ENCODE measurements at regions of chr22 and their contacts with region 1.

Region 1: DNA sequence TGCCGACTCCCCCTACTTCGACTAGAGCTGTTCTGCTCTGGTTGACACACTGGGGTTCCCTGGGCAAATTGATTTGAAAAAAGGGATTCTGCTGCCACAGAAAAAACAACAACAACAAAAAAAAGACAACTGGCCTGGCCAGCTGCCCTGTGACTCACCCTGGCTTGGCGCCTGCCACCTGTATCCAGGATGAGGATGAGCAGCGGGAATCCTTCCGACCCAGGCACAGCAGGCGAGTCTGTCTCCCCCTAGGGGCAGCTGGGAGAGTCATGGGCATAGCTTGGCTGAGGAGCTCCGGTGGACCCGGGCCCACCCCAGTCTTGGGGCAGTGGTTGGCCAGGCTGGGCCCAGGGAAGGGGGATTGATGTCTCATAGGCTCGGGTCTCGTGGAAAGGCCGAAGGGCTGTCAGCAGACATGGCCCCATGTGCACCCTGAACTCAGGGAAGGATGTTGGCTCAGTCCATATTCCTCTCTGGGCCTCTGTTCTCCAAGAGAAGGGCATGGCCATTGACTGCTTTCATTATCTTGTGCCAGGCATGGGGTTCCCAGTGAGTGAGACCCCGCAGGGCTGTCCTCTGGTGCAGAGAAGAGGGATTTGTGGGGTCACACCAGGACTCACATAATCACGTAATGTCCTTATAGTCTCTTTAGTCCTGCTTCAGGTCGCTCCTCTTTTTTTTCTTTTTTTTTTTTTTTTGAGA is 10.4 kb upstream of the SUN2 start:
- DNase-seq: peak; percentile 64
- ATAC-seq: peak; percentile 42 to 78

Region 2: GRCh38 chr22:38802671-38803121 is 36.5 kb after region 1 on chr22:
- intact Hi-C with region 1: no loop called
- DNase-seq: peak; percentile 63
- ATAC-seq: peak; percentile 94 to 95

Region 3: GRCh38 chr22:38843201-38843715 is 77.0 kb after region 1 on chr22:
- intact Hi-C with region 1: loop called in 1 of 2 experiments (anchors 5 kb)
- DNase-seq: peak; percentile 60
- ATAC-seq: peak; percentile 69 to 83

Region 4: DNA sequence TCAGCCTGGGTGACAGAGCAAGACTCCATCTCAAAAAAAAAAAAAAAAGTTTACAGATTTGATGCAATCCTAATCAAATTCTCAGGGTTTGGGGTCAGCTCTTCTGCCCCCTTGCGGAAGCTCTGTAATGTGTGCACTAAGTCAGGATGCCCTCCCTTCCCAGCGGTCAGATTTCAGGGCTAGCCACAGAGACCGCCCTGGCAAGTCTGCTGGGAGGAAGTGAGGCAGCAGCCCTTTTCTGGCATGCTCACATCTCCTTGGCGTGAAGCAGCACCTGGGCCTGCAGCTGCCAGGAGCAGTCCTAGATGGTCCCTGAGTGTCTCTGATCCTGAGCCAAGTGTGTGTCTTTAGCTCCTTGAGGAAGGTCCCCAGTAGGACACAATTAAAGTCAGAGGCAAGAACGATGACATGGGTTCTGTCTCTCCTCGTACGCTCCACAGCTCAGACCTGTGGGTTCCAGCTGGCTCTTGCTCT is 237.0 kb after region 1 on chr22:
- intact Hi-C with region 1: loop called in 1 of 2 experiments (anchors 10 kb)
- DNase-seq: peak; percentile 81
- ATAC-seq: peak; percentile 92 to 96

Measured in left cardiac atrium (tissue), 4 donors.